Activated naive CD4-positive, alpha-beta T cell treated with anti-CD3 and anti-CD28 coated beads for 36 hours (primary cell): ENCODE measurements at regions of chr17 and their contacts with region 1.

Region 1: GRCh38 chr17:47066841-47067682 is 88.0 kb upstream of the RPRML start:
- DNase-seq: peak; percentile 88
- H3K4me3 Mint-ChIP-seq: peak overlapping the region; percentile 93
- H3K27ac Mint-ChIP-seq: peak overlapping the region; percentile 94
- H3K4me1 Mint-ChIP-seq: peaks cover 26% of the 10 kb centered on the region
- H3K27me3 Mint-ChIP-seq: no peaks in the 10 kb centered on the region

Region 2: GRCh38 chr17:46811978-46812583 is 255.0 kb before region 1 on chr17:
- CTCF ChIA-PET with region 1: no interaction called
- intact Hi-C with region 1: no loop called
- DNase-seq: no peak
- H3K4me3 Mint-ChIP-seq: no peak overlapping the region
- H3K27ac Mint-ChIP-seq: no peak overlapping the region
- H3K4me1 Mint-ChIP-seq: peaks cover under 1% of the 10 kb centered on the region
- H3K27me3 Mint-ChIP-seq: peaks cover 36% of the 10 kb centered on the region

Region 3: DNA sequence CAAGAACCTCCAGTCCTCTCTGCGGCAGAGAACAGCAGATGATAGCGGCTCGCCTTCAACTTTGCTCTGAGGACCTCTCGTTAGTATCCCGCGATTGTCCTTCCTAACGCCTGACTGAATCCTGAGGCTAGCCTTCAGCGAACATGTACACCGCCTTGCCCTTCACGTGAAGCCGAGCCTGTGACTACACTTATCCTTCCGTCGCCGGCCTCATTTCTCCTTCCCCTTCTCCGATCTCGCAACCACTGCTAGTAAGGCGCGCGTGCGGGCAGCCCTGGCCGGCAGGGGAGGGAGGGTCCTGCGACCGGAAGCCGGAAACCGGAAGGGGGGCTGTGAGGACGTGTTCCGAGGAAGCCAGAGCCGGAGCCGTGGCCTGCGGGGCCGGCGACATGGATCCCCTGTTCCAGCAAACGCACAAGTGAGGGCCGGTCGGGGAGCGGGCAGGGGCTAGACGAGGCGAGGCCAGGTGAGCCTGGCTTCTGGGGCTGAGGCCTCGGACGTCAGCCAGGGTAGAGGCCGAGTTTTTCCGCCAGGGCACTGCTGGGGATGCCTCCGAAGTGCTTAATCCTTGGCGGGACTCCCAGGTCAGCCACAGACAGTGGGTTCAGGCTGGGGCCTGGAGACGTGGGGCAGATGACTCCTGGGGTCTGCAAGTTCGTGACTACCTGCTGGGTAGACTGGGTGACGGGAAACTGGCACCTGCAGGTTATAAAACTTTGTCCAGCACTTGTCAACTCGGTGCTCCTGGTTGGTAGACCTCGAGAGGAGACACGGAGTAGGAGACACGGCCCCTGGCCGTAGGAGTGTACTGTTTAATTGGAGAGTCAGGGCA is 144.0 kb before region 1 on chr17 and contains the start of gene GOSR2:
- CTCF ChIA-PET with region 1: no interaction called
- intact Hi-C with region 1: loop called (anchors 10 kb)
- DNase-seq: peak; percentile 92
- H3K4me3 Mint-ChIP-seq: peak within 1 kb of the TSS; percentile 96
- H3K27ac Mint-ChIP-seq: peak within 1 kb of the TSS; percentile 99
- H3K4me1 Mint-ChIP-seq: peaks cover 49% of the 10 kb centered on the region
- H3K27me3 Mint-ChIP-seq: no peaks in the 10 kb centered on the region
- total RNA-seq, gene GOSR2: 32.8 to 38.1 TPM

Region 4: GRCh38 chr17:47099987-47100711 is 33.1 kb after region 1 on chr17:
- CTCF ChIA-PET with region 1: no interaction called
- intact Hi-C with region 1: loop called (anchors 2 kb)
- DNase-seq: peak; percentile 96
- H3K4me3 Mint-ChIP-seq: peak overlapping the region; percentile 100
- H3K27ac Mint-ChIP-seq: peak overlapping the region; percentile 90
- H3K4me1 Mint-ChIP-seq: peaks cover 16% of the 10 kb centered on the region
- H3K27me3 Mint-ChIP-seq: no peaks in the 10 kb centered on the region